ENCODE measurements at regions of chr3 and their contacts with region 1.

Region 1: DNA sequence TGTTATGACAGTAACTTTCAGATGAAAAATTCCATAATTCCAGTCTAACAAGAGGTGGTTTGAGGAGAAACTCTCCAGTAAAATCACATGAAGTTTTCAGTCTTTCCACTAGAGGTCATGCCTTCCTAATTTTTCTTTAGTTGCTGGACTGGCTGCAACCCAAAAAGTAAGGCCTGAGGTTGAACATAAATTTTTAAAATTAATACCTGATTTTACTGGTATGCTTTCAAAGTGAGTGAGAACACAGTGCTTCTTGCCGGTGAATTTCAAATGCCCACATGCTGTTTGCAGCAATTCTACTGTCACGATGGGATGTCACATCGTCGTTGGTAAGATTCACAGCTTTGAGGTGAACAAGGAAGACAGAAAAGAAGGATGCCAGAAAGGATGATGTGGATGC is 89.0 kb upstream of the FGF12 start:
- DNase-seq: peak in 4 of 5 donors; percentile 28 to 45 (median 38)
- H3K4me3 ChIP-seq: no peak overlapping the region
- H3K4me3 Mint-ChIP-seq: peak overlapping the region in 1 of 8 donors; percentile 6
- H3K27ac ChIP-seq: no peak overlapping the region
- H3K27ac Mint-ChIP-seq: peak overlapping the region in 1 of 7 donors; percentile 51
- H3K4me1 ChIP-seq: peaks cover 21% of the 10 kb centered on the region
- H3K4me1 Mint-ChIP-seq: peaks cover 2 to 51% (median 30%) of the 10 kb centered on the region in 4 donors
- H3K27me3 ChIP-seq: no peaks in the 10 kb centered on the region
- H3K27me3 Mint-ChIP-seq: no peaks in the 10 kb centered on the region

Region 2: DNA sequence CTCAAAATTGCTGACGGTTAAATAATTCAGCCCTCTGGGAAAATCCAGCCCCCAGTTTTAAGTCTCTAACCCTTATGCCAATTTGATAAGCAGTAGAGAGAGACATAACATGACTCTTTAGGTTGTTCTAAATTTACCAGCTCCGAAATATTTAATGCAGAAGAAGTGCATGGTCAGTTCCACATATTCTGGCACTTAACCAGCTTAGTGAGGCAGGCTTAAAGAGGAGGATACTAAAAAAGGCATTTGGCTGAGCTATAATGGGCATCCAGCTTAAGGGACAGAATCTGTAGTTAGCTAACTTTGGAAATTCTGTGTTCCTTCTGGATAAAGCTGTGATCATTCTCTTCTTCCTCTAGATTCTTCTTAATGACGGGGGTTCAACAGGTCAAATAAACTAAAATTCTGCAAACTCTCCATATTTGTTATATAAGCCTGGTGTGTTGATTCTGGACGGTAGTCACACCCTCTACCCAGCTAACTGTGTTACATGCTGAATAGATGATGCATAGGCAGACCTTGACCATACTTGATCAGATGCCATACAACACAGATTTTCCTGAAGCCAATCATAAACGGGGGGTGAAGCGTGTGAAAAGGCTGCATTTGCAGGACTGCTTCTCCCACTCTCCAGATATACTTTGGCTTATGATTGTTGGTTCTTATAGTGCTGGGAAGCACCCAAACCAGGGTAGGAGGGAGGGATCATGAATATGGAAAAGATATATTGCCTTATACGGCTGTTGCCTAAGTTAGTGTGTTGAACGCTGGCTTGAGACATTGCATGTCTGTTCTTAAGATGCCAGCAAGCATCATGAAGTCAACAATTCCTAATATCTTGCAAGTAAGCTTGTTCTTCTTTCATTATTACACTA is 207.4 kb before region 1 on chr3:
- CTCF ChIA-PET with region 1: no interaction called
- POLR2A ChIA-PET with region 1: no interaction called
- intact Hi-C with region 1: no loop called
- DNase-seq: no peak
- H3K4me3 ChIP-seq: no peak overlapping the region
- H3K4me3 Mint-ChIP-seq: no peak overlapping the region
- H3K27ac ChIP-seq: no peak overlapping the region
- H3K27ac Mint-ChIP-seq: no peak overlapping the region
- H3K4me1 ChIP-seq: no peaks in the 10 kb centered on the region
- H3K4me1 Mint-ChIP-seq: no peaks in the 10 kb centered on the region
- H3K27me3 ChIP-seq: no peaks in the 10 kb centered on the region
- H3K27me3 Mint-ChIP-seq: no peaks in the 10 kb centered on the region

Region 3: GRCh38 chr3:192869131-192870031 is 53.0 kb after region 1 on chr3:
- CTCF ChIA-PET with region 1: no interaction called
- POLR2A ChIA-PET with region 1: no interaction called
- intact Hi-C with region 1: no loop called
- DNase-seq: no peak
- H3K4me3 ChIP-seq: no peak overlapping the region
- H3K4me3 Mint-ChIP-seq: peak overlapping the region in 1 of 8 donors; percentile 63
- H3K27ac ChIP-seq: no peak overlapping the region
- H3K27ac Mint-ChIP-seq: no peak overlapping the region
- H3K4me1 ChIP-seq: peaks cover 6% of the 10 kb centered on the region
- H3K4me1 Mint-ChIP-seq: peaks cover 3 to 43% (median 20%) of the 10 kb centered on the region in 4 donors
- H3K27me3 ChIP-seq: no peaks in the 10 kb centered on the region
- H3K27me3 Mint-ChIP-seq: peaks cover 0 to 1% of the 10 kb centered on the region in 2 donors

Region 4: DNA sequence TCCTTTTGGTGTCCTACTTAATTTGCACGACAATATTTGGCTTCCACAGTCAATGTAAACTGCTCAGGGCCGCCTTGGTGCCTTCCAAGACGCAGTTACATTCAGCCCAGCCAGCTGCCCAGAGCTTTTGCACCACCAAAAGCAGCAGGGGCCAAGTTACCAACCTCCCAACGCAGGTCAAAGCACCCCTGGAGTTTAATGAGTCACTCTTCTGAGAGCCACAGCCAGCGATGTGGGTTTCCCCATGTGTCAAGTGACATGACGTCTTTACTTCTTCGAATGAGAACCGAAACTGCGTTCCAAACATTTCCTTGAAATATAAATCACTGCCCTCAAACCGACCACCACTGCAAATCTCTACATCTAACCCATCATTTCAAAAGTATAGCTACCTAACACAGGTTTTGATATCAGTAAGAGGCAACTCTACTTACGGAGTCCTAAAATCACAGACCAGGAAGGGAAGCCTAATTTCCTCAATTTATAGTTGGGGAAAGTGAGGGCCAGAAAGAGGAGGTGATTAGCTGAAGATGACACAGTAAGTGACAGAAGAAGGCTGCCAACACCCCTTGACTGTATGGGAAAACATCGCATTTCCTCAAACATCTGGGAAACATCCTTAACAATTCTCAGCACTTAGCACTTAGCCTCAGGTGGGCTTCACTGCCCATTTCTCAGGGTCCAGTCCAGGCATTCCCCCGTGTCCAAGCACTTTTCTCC is 76.8 kb after region 1 on chr3:
- CTCF ChIA-PET with region 1: interaction called, 4 read pairs
- POLR2A ChIA-PET with region 1: no interaction called
- intact Hi-C with region 1: loop called (anchors 5 kb)
- DNase-seq: peak; percentile 67 to 89 (median 74)
- H3K4me3 ChIP-seq: peak overlapping the region in 1 of 2 donors; percentile 41
- H3K4me3 Mint-ChIP-seq: peak overlapping the region; percentile 63 to 88 (median 78)
- H3K27ac ChIP-seq: peak overlapping the region; percentile 68
- H3K27ac Mint-ChIP-seq: peak overlapping the region; percentile 86 to 99 (median 95)
- H3K4me1 ChIP-seq: peaks cover 98% of the 10 kb centered on the region
- H3K4me1 Mint-ChIP-seq: peaks cover 29 to 91% (median 63%) of the 10 kb centered on the region in 4 donors
- H3K27me3 ChIP-seq: no peaks in the 10 kb centered on the region
- H3K27me3 Mint-ChIP-seq: peaks cover 0 to 3% of the 10 kb centered on the region in 2 donors

Region 5: GRCh38 chr3:193030276-193030675 is 213.9 kb after region 1 on chr3:
- CTCF ChIA-PET with region 1: interaction called, 10 read pairs
- POLR2A ChIA-PET with region 1: no interaction called
- intact Hi-C with region 1: no loop called
- DNase-seq: no peak
- H3K4me3 ChIP-seq: no peak overlapping the region
- H3K4me3 Mint-ChIP-seq: no peak overlapping the region
- H3K27ac ChIP-seq: no peak overlapping the region
- H3K27ac Mint-ChIP-seq: no peak overlapping the region
- H3K4me1 ChIP-seq: peaks cover 10% of the 10 kb centered on the region
- H3K4me1 Mint-ChIP-seq: peaks cover 3 to 11% (median 7%) of the 10 kb centered on the region in 4 donors
- H3K27me3 ChIP-seq: no peaks in the 10 kb centered on the region
- H3K27me3 Mint-ChIP-seq: no peaks in the 10 kb centered on the region

Region 6: GRCh38 chr3:193040836-193041672 is 224.7 kb after region 1 on chr3:
- CTCF ChIA-PET with region 1: interaction called, 112 read pairs
- POLR2A ChIA-PET with region 1: no interaction called
- intact Hi-C with region 1: loop called (anchors 1 kb)
- DNase-seq: peak; percentile 34 to 57 (median 51)
- H3K4me3 ChIP-seq: no peak overlapping the region
- H3K4me3 Mint-ChIP-seq: no peak overlapping the region
- H3K27ac ChIP-seq: no peak overlapping the region
- H3K27ac Mint-ChIP-seq: no peak overlapping the region
- H3K4me1 ChIP-seq: no peaks in the 10 kb centered on the region
- H3K4me1 Mint-ChIP-seq: peaks cover 0 to 1% (median 0%) of the 10 kb centered on the region in 4 donors
- H3K27me3 ChIP-seq: no peaks in the 10 kb centered on the region
- H3K27me3 Mint-ChIP-seq: peaks cover 0 to 1% of the 10 kb centered on the region in 2 donors

Measured in CD4-positive, alpha-beta memory T cell (primary cell).